Aorta (tissue), 5 donors: ENCODE measurements at regions of chr15 and their contacts with region 1.

Region 1: GRCh38 chr15:75042730-75043508 is 19.5 kb downstream of the PPCDC start:
- DNase-seq: peak; percentile 90 to 91
- ATAC-seq: peak; percentile 78
- H3K4me3 ChIP-seq: no peak overlapping the region
- H3K27ac ChIP-seq: peak overlapping the region; percentile 20 to 42
- H3K4me1 ChIP-seq: no peaks in the 10 kb centered on the region
- H3K27me3 ChIP-seq: no peaks in the 10 kb centered on the region

Region 2: DNA sequence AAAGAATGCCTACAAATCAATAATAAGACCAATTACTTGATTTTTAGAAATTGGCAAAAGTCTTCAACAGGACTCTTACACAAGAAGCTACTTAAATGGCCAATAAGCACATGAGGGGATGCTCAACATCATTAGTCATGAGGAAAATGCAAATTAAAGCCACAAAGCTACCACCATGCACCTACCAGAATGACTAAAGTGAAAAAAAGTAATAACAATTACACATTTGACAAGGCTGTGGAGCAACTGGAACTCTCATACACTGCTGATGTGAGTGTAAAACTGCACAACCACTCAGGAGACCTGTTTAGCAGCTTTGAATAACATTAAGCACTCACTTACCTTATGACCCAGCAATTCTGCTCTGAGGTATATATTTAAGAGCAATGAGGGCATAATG is 48.9 kb after region 1 on chr15:
- intact Hi-C with region 1: no loop called
- DNase-seq: no peak
- ATAC-seq: no peak
- H3K4me3 ChIP-seq: no peak overlapping the region
- H3K27ac ChIP-seq: no peak overlapping the region
- H3K4me1 ChIP-seq: no peaks in the 10 kb centered on the region
- H3K27me3 ChIP-seq: no peaks in the 10 kb centered on the region

Region 3: DNA sequence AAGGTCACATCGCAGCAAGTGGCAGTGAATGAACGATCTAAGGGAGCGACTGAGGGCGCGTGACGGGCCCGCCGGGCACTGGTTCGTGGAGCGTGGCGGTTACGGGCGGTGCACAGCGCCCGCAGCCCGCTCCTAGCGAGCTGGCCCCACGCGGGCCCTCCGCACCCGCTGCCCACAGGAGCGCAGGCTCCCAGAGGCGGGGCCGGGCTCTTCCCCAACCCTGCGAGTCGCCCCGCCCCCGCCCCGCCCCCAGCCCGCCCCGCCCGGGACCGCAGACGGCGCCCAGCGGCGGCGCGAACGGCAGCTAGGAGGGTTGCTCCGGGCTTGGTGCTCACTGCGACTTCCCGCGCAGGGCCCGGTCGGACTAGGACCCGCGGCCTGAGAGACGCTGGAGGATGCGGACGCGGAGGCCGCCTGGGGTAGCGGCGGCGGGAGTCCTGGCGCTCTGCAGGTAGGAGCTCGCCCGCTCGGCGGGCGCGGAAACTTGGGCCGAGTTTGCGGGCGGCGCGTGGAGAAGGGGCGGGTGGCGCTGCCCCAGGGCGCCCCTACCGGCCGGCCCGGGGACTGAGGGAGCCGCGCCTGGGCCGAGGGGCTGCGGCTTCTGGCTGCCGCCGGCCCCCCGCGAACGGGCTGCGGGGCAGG is 158.8 kb after region 1 on chr15 and contains the start of gene C15orf39:
- intact Hi-C with region 1: loop called in 1 of 2 experiments (anchors 2 kb)
- DNase-seq: peak; percentile 80 to 92
- ATAC-seq: peak; percentile 88
- H3K4me3 ChIP-seq: peak within 1 kb of the TSS; percentile 60 to 63
- H3K27ac ChIP-seq: peak within 1 kb of the TSS in 1 of 2 donors; percentile 60
- H3K4me1 ChIP-seq: no peaks in the 10 kb centered on the region
- H3K27me3 ChIP-seq: no peaks in the 10 kb centered on the region
- total RNA-seq, gene C15orf39: 24.6 to 26.8 TPM